ENCODE measurements at regions of chr10 and their contacts with region 1.

Region 1: GRCh38 chr10:82160327-82160726 is 285.3 kb downstream of the NRG3 start:
- DNase-seq: no peak
- H3K4me3 Mint-ChIP-seq: no peak overlapping the region
- H3K27ac Mint-ChIP-seq: no peak overlapping the region
- H3K4me1 Mint-ChIP-seq: peaks cover 49% of the 10 kb centered on the region
- H3K27me3 Mint-ChIP-seq: no peaks in the 10 kb centered on the region
- CTCF ChIP-seq: no peak

Region 2: DNA sequence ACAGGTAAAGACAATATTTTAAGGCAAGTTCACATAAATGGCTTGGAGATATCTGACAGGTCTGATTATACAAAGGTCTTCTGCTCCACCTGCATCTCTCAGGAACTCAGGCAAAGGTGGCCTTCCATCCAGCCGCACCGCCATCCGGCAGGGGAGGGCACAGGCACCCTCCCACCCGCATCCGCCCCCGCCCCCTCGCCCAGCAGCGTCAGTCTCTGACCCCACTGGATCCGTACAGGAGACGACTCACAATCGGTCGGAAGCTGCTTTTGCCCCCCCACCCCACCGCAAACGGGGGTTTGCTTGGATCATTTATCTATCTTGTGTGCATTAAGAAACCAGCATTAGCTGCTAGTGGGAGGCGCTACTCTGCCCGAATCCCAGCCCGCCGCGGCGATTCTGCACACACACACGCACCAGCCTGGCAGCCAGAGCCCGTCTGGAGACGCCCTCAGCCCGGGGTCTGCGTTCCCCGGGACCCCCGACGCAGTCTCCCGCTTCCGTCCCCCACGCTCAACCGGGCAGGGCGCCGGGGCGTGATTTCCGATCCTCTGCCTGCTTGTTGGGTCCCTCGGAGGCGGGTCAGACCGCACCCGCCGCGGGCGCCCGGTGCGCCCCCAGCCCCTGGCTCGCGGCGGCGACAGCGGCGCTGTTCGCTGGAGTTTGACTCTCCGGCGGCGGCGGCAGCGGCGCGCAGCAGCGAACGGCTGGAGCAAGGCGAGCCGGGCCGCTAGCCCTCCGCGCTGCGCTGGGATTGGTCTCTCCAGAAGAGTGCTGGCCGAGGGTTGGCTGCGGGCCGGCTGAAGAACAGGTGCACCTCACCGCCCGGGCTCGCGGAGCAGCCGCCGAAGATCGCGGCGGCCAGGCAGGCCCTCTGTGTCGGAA is 286.2 kb before region 1 on chr10:
- CTCF ChIA-PET with region 1: no interaction called
- intact Hi-C with region 1: loop called (anchors 5 kb)
- DNase-seq: peak; percentile 86
- H3K4me3 Mint-ChIP-seq: peak overlapping the region; percentile 88
- H3K27ac Mint-ChIP-seq: no peak overlapping the region
- H3K4me1 Mint-ChIP-seq: peaks cover 38% of the 10 kb centered on the region
- H3K27me3 Mint-ChIP-seq: no peaks in the 10 kb centered on the region
- CTCF ChIP-seq: no peak

Region 3: DNA sequence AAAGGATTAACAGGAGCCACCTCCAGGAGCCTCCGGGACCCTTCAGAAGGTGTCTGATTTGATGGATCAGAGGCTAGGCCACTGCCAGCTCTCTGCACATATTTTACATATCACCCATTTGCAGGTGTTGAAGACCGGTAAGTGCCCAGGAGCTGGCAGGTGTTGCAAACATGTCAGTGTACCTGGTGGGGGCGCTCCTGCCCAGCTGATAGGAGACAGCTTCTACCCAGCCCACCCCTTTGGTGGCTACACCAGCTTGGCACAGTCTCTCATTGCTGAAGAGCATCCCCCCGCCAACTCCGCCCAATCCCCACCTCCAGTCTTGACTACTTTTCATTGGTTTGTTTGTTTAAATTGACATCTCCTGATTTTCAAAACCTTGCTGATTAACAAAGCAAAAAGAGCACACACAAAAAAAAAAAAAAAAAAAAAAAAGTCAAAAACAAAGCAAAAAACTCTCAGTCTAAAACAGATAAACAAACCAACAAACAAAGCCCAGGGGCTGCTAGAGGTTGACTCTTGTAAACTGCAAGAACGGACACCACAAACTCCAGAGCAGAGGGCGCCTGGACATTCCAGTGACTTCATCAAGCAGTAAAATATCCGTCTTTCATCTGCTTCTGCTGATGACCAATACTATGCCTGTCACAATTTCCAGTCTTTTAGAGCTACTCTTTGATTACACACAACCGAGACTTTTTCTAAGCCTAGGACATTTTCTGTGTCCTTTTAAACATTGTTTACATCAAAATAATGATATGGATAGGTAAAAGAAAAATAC is 10.0 kb before region 1 on chr10:
- CTCF ChIA-PET with region 1: interaction called, 11 read pairs
- intact Hi-C with region 1: no loop called
- DNase-seq: peak; percentile 69
- H3K4me3 Mint-ChIP-seq: no peak overlapping the region
- H3K27ac Mint-ChIP-seq: no peak overlapping the region
- H3K4me1 Mint-ChIP-seq: peaks cover 8% of the 10 kb centered on the region
- H3K27me3 Mint-ChIP-seq: no peaks in the 10 kb centered on the region
- CTCF ChIP-seq: peak; percentile 65

Region 4: GRCh38 chr10:82176587-82176986 is 16.3 kb after region 1 on chr10:
- CTCF ChIA-PET with region 1: no interaction called
- intact Hi-C with region 1: loop called (anchors 2 kb)
- DNase-seq: no peak
- H3K4me3 Mint-ChIP-seq: no peak overlapping the region
- H3K27ac Mint-ChIP-seq: no peak overlapping the region
- H3K4me1 Mint-ChIP-seq: no peaks in the 10 kb centered on the region
- H3K27me3 Mint-ChIP-seq: no peaks in the 10 kb centered on the region
- CTCF ChIP-seq: no peak

Region 5: DNA sequence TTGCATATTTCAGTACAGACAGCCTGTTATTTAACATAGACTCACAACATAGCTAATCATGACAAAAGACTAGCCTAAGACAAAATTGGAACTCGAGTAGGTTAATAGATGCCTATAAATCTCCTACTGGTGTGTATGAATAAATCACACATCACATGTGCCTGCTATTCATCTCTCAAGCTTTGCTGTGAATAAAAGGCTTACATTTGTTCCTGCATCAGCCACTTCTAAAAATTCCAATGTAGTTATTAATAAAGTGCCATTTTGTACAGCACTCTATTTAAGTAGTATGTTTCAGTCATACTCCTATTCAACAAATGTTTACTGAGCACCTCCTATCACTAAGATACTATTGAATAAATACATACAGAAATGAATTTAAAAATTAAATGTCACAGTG is 200.9 kb after region 1 on chr10:
- CTCF ChIA-PET with region 1: no interaction called
- intact Hi-C with region 1: loop called (anchors 10 kb)
- DNase-seq: no peak
- H3K4me3 Mint-ChIP-seq: no peak overlapping the region
- H3K27ac Mint-ChIP-seq: no peak overlapping the region
- H3K4me1 Mint-ChIP-seq: no peaks in the 10 kb centered on the region
- H3K27me3 Mint-ChIP-seq: no peaks in the 10 kb centered on the region
- CTCF ChIP-seq: no peak

Measured in Calu3 (cell line).